ENCODE measurements at regions of chr9 and their contacts with region 1.

Region 1: GRCh38 chr9:83405759-83406158 is 132.4 kb downstream of the FRMD3 start:
- DNase-seq: no peak
- H3K4me3 ChIP-seq: no peak overlapping the region
- H3K27ac ChIP-seq: no peak overlapping the region
- H3K4me1 ChIP-seq: no peaks in the 10 kb centered on the region
- H3K27me3 ChIP-seq: no peaks in the 10 kb centered on the region
- CTCF ChIP-seq: no peak
- POLR2A ChIP-seq: no peak

Region 2: GRCh38 chr9:82570226-82570625 is 835.5 kb before region 1 on chr9:
- intact Hi-C with region 1: no loop called
- DNase-seq: no peak
- H3K4me3 ChIP-seq: no peak overlapping the region
- H3K27ac ChIP-seq: no peak overlapping the region
- H3K4me1 ChIP-seq: no peaks in the 10 kb centered on the region
- H3K27me3 ChIP-seq: no peaks in the 10 kb centered on the region
- CTCF ChIP-seq: no peak
- POLR2A ChIP-seq: no peak

Region 3: DNA sequence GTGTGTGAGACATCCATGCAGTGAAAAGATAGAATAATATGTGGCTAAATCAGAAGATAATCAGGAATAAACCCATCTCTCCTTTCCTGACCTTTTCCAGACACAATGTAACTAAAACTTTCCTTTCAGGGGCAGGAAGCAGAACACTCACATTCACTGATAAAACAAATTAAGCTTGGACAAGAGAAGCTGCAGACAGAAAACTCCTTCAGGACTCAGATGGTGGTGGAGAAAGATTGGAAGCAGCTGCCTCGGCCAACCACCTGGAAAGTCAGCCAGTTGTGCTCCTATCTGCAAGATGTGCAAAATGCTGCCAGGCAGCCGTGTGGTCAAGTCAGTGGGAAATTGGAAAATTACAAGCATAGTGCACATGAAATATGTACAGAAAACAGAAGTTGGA is 369.7 kb before region 1 on chr9:
- intact Hi-C with region 1: loop called (anchors 5 kb)
- DNase-seq: no peak
- H3K4me3 ChIP-seq: no peak overlapping the region
- H3K27ac ChIP-seq: no peak overlapping the region
- H3K4me1 ChIP-seq: no peaks in the 10 kb centered on the region
- H3K27me3 ChIP-seq: no peaks in the 10 kb centered on the region
- CTCF ChIP-seq: no peak
- POLR2A ChIP-seq: no peak

Region 4: GRCh38 chr9:83765376-83765775 is 359.6 kb after region 1 on chr9:
- intact Hi-C with region 1: no loop called
- DNase-seq: no peak
- H3K4me3 ChIP-seq: no peak overlapping the region
- H3K27ac ChIP-seq: no peak overlapping the region
- H3K4me1 ChIP-seq: no peaks in the 10 kb centered on the region
- H3K27me3 ChIP-seq: no peaks in the 10 kb centered on the region
- CTCF ChIP-seq: no peak
- POLR2A ChIP-seq: no peak

Region 5: GRCh38 chr9:84891924-84892323 is 1486.2 kb after region 1 on chr9:
- intact Hi-C with region 1: no loop called
- DNase-seq: no peak
- H3K4me3 ChIP-seq: no peak overlapping the region
- H3K27ac ChIP-seq: no peak overlapping the region
- H3K4me1 ChIP-seq: no peaks in the 10 kb centered on the region
- H3K27me3 ChIP-seq: no peaks in the 10 kb centered on the region
- CTCF ChIP-seq: no peak
- POLR2A ChIP-seq: no peak

Measured in breast epithelium (tissue), 4 donors.